ENCODE measurements at regions of chr1 and their contacts with region 1.

Region 1: GRCh38 chr1:77888081-77888780 is at the start of gene NEXN:
- DNase-seq: peak; percentile 58
- H3K4me3 ChIP-seq: peak within 1 kb of the TSS; percentile 56 to 82 (median 72)
- H3K27ac ChIP-seq: peak within 1 kb of the TSS; percentile 85 to 95 (median 86)
- H3K4me1 ChIP-seq: peaks cover 0 to 22% (median 3%) of the 10 kb centered on the region in 4 donors
- H3K27me3 ChIP-seq: peaks cover 10% of the 10 kb centered on the region
- CTCF ChIP-seq: no peak
- EP300 ChIP-seq: peak; percentile 48
- POLR2A ChIP-seq: peak; percentile 66
- total RNA-seq, gene NEXN: 9.7 to 32.2 (median 17.0) TPM

Region 2: GRCh38 chr1:77834771-77835334 is 53.4 kb before region 1 on chr1:
- in situ Hi-C with region 1: no loop called
- intact Hi-C with region 1: loop called (anchors 5 kb)
- DNase-seq: peak; percentile 20
- H3K4me3 ChIP-seq: no peak overlapping the region
- H3K27ac ChIP-seq: peak overlapping the region; percentile 76 to 87 (median 80)
- H3K4me1 ChIP-seq: peaks cover 12 to 73% (median 38%) of the 10 kb centered on the region in 4 donors
- H3K27me3 ChIP-seq: no peaks in the 10 kb centered on the region
- CTCF ChIP-seq: no peak
- EP300 ChIP-seq: no peak
- POLR2A ChIP-seq: no peak

Measured in transverse colon (tissue), 4 donors.